ENCODE measurements at regions of chr2 and their contacts with region 1.

Region 1: GRCh38 chr2:102355526-102356380 is at the start of gene IL18R1:
- DNase-seq: peak; percentile 83
- CTCF ChIP-seq: peak; percentile 87

Region 2: DNA sequence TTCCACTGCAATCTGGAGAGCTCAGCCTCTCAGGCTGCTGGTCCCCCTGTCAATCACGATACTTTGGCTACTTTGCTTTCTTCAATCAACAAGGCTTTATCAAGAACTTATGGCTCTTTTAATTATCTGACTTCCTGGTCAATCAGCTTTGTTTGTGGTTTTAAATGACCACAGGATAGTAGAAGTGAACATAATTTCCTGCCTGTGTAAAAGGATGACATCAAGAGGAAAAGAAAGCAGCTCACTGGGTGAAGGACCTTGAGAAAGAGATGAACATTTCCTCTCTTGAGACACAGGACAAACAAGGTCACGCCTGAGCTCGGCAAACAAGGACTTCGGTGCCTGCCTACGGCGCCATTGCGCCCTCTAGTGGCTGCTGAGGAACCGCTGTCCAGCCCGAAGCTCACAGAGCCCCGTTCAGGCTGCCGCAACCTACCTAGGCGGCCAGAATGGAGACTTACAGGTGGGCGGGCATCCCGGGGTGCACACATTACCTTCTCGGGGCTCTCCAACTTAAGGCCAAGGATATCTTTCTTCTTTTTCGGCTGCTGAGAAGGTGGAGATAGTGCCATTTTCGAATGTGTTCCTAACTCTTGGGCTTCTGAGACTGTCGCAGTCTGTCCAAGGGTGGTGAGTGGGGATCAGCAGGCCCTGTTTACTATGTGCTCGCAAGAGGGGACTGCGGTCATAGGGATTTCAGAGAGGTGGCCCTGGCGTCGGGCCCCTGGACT is 114.9 kb before region 1 on chr2:
- in situ Hi-C with region 1: no loop called
- DNase-seq: peak; percentile 88
- CTCF ChIP-seq: peak; percentile 98

Region 3: GRCh38 chr2:102251042-102251848 is 104.5 kb before region 1 on chr2:
- in situ Hi-C with region 1: loop called (anchors 10 kb)
- DNase-seq: peak; percentile 76
- CTCF ChIP-seq: peak; percentile 67

Region 4: GRCh38 chr2:103222974-103223373 is 867.2 kb after region 1 on chr2:
- in situ Hi-C with region 1: no loop called
- DNase-seq: no peak
- CTCF ChIP-seq: no peak

Measured in GM13976 (cell line).